ENCODE measurements at regions of chr1 and their contacts with region 1.

Region 1: DNA sequence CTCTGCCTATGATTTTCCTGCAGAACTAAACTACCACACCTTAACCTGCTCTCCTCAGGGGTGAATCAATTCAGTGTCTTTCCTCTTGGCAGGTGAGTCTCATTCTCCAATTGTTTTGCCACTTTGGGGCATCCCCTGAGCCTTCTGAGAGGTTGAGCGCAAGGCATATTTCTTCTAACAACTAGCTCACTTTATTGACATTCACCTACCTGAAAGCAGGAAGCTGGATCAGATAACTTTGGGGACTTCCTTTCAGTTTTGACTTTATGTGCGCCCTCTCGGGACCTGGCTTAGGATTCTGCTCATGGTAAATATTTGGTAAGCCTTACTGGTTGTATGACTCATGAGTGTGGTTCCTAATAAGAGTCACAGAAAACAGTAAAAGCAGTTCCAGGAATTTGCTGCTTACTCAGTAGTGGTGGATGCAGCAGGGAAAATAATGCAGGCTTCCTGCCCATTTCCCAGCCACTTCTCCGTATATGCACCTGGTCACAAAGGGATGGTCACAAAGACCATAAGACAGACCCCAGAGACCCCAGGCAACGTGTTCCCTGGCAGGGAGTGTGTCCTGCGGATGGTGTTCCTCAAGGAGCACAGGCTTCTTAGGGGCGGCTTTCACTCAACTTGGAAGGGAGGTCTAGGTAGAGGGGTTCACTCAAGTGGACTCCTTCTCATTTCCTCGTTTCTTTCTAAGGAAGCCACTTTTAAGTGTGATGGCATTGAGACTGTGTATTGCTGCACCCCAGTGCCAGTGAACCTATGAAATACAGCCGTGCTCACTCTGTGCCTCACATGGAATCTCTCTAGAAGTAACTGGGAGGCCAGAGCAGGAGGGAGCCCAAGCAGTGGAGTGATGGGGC is 22.0 kb upstream of the BATF3 start:
- DNase-seq: peak; percentile 99
- ATAC-seq: peak; percentile 97
- H3K4me3 ChIP-seq: peak overlapping the region; percentile 47
- H3K27ac ChIP-seq: peak overlapping the region; percentile 68
- H3K4me1 ChIP-seq: peaks cover 17% of the 10 kb centered on the region
- H3K27me3 ChIP-seq: no peaks in the 10 kb centered on the region
- CTCF ChIP-seq: no peak; the same call in 1 of the 2 replicates

Region 2: DNA sequence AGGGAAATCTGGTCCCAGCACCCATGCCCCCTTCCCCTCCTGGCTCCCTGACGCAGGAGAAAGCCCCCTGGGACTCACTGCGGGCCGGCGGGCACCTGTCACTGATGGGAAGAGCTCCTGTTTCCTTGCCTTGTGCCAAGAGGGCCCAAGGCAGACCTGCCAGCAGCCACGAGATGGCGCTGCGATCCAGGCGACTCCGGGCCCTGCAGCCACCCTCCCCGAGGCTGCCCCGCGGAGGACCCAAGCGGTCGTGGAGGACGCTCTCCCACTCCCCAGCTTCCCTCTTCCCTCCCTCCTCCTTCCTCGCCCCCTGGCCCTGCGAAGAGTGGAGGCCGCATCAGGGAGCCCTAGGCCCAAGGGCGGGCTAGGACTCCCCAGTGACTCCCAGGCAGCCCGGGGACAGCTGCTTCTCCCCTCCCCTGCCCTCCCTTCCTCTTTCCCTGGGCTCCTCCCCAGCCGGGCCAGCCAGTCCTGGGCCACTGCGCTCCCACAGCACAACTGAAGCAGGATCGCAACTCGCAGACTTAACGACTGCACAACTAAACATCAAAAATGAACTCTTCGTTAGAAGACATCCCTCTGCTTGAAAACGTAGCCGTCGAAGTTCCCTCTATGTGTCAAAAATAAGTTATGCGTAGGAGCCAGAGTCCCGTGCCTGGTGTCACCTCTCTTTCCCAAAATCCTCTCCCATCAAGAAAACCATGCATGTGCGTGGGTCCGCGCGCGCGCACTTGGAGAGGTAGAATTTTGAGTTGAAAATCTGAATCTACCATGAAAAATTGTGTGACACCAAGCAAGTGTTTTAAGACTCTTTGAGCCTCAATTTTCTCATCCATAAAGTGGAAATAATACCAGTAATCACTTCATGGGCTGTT is 56.1 kb before region 1 on chr1:
- CTCF ChIA-PET with region 1: interaction called, 12 read pairs
- POLR2A ChIA-PET with region 1: interaction called, 3 read pairs
- intact Hi-C with region 1: loop called (anchors 1 kb)
- DNase-seq: peak; percentile 95
- ATAC-seq: peak; percentile 88
- H3K4me3 ChIP-seq: peak overlapping the region; percentile 72
- H3K27ac ChIP-seq: no peak overlapping the region; the same call in 1 of the 2 replicates
- H3K4me1 ChIP-seq: peaks cover 35% of the 10 kb centered on the region
- H3K27me3 ChIP-seq: no peaks in the 10 kb centered on the region
- CTCF ChIP-seq: peak; percentile 99

Region 3: GRCh38 chr1:212749821-212750535 is 28.4 kb after region 1 on chr1:
- CTCF ChIA-PET with region 1: interaction called, 6 read pairs
- POLR2A ChIA-PET with region 1: no interaction called
- intact Hi-C with region 1: loop called (anchors 2 kb)
- DNase-seq: peak; percentile 80
- ATAC-seq: peak; percentile 76
- H3K4me3 ChIP-seq: no peak overlapping the region
- H3K27ac ChIP-seq: no peak overlapping the region
- H3K4me1 ChIP-seq: no peaks in the 10 kb centered on the region
- H3K27me3 ChIP-seq: no peaks in the 10 kb centered on the region
- CTCF ChIP-seq: peak; percentile 93

Region 4: GRCh38 chr1:212791676-212792395 is 70.2 kb after region 1 on chr1 and contains the starts of genes NSL1 and TATDN3:
- CTCF ChIA-PET with region 1: no interaction called
- POLR2A ChIA-PET with region 1: no interaction called
- intact Hi-C with region 1: loop called (anchors 2 kb)
- DNase-seq: peak; percentile 99
- ATAC-seq: peak; percentile 92
- H3K4me3 ChIP-seq: peak within 1 kb of the TSS; percentile 87
- H3K27ac ChIP-seq: peak within 1 kb of the TSS; percentile 62
- H3K4me1 ChIP-seq: peaks cover 5% of the 10 kb centered on the region; the same call in 1 of the 2 replicates
- H3K27me3 ChIP-seq: no peaks in the 10 kb centered on the region
- CTCF ChIP-seq: no peak
- total RNA-seq, gene NSL1: 37.3 and 56.1 TPM in 2 replicates
- total RNA-seq, gene TATDN3: 8.8 and 12.7 TPM in 2 replicates